Sigmoid colon (tissue), 7 donors: ENCODE measurements at regions of chr10 and their contacts with region 1.

Region 1: DNA sequence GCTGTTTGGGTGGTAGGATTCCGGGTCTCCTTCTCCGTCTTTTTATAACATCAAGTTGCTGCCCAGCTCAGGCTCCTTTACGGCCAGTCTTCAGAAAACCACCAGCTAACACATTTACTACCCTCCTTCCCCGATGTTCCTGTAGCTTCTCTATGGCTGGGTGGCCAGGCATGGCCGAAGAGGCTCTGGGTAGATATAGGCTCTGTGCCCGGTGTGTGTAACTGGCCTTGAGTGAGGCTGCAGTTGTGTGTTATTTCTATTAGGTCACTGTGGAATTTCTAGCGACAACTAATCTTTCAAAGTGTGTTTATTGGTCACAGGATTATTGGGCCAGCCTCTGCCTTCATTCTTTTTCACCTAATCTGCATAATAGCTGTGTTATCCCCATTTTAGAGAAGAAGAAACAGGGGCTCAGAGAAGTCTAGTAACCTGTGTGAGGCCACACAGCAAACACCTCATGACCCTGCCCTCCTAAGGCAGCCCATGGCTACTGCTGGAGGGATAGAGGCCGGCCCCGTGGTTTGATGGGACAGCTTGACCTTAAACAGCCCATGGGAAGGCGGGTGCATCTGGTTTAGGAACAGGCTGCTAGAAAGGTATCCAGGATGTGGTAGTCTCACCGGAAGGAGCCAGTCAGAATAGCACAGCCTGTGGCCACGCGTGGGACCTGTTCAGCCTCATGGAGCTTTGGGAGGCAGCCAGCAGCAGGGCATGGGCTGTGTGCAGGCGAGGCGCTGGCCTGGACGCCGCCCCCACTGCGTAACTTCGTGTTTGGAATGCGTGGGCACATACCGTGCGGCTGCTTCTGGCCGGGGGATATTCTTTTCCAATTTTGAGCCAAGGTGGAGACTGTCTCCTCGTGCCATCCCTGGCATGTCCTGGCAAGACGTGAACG is 29.7 kb downstream of the HTRA1 start:
- DNase-seq: peak; percentile 83
- H3K4me3 ChIP-seq: no peak overlapping the region
- H3K27ac ChIP-seq: peak overlapping the region in 3 of 4 donors; percentile 65 to 87 (median 74)
- H3K4me1 ChIP-seq: peaks cover 0 to 85% (median 83%) of the 10 kb centered on the region in 4 donors
- H3K27me3 ChIP-seq: no peaks in the 10 kb centered on the region
- CTCF ChIP-seq: no peak
- EP300 ChIP-seq: peak in 1 of 4 donors; percentile 89
- POLR2A ChIP-seq: no peak

Region 2: DNA sequence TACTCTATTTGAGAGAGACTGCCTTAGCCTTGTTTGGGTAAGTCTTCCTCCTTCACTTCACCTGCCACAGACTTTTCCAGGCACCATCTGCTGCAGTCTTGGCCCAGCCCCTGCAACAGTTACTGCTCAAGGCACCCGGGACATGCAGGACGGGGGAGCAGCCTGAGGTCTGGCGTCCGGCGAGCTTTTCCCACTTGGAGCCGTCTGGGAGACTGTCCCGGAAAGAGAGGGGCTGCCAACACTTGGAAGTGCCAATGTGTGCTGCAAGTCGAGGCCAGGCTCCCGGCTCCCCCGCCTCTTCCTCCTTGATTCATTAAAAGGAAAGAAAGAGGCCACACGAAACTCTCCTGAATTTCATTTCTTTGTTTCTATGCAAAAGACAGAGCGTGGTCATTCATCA is 15.9 kb before region 1 on chr10:
- intact Hi-C with region 1: loop called (anchors 2 kb)
- DNase-seq: peak; percentile 94
- H3K4me3 ChIP-seq: peak overlapping the region in 3 of 4 donors; percentile 4 to 11 (median 10)
- H3K27ac ChIP-seq: peak overlapping the region; percentile 49 to 85 (median 69)
- H3K4me1 ChIP-seq: peaks cover 0 to 57% (median 46%) of the 10 kb centered on the region in 4 donors
- H3K27me3 ChIP-seq: no peaks in the 10 kb centered on the region
- CTCF ChIP-seq: no peak
- EP300 ChIP-seq: no peak
- POLR2A ChIP-seq: no peak